Natural killer cell (primary cell): ENCODE measurements at regions of chr1 and their contacts with region 1.

Region 1: DNA sequence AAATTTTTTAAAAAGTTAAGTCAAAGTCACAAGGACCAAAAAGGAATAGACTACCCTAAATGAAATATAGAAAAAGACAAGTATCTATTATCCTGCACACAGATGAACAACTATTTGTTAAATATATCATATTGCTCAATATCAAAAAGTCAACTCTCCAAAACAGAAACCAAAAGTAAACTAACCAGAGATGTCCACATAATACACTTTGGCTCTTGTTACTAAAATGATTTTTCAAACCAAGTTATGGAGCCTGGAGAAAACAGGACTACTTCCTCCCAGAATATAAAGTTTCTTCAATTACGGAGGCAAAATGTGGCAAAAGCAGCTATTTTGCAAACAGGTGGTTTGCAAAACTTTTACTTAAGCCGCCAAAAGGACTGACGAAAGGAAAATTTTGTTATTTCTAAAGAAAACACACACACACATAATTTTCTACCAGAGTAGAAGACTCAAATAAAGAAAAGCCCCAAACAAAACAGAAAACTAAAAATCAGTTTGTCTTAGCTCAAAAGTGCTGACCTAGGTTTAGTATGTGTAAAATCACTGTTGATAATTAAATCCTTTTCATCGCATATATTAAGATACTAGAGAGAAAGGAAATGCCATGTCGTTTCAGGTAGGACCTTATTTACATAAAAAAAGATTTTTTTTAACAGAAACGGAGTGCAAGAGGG is 1.1 kb downstream of the DPYD start:
- DNase-seq: peak in 1 of 2 donors; percentile 38
- ATAC-seq: no peak
- H3K4me3 ChIP-seq: peak overlapping the region; percentile 90
- H3K4me3 Mint-ChIP-seq: peak overlapping the region; percentile 97
- H3K27ac ChIP-seq: peak overlapping the region; percentile 83
- H3K27ac Mint-ChIP-seq: peak overlapping the region; percentile 91 to 94
- H3K4me1 ChIP-seq: peaks cover 3% of the 10 kb centered on the region
- H3K4me1 Mint-ChIP-seq: peaks cover 51 to 52% of the 10 kb centered on the region in 2 donors
- H3K27me3 ChIP-seq: no peaks in the 10 kb centered on the region
- H3K27me3 Mint-ChIP-seq: no peaks in the 10 kb centered on the region
- CTCF ChIP-seq: no peak

Region 2: GRCh38 chr1:97849345-97850340 is 70.1 kb before region 1 on chr1:
- intact Hi-C with region 1: loop called (anchors 5 kb)
- DNase-seq: no peak
- ATAC-seq: peak; percentile 58 to 71 (median 61)
- H3K4me3 ChIP-seq: no peak overlapping the region
- H3K4me3 Mint-ChIP-seq: peak overlapping the region; percentile 63
- H3K27ac ChIP-seq: no peak overlapping the region
- H3K27ac Mint-ChIP-seq: peak overlapping the region in 1 of 2 donors; percentile 31
- H3K4me1 ChIP-seq: no peaks in the 10 kb centered on the region
- H3K4me1 Mint-ChIP-seq: peaks cover 10 to 17% of the 10 kb centered on the region in 2 donors
- H3K27me3 ChIP-seq: no peaks in the 10 kb centered on the region
- H3K27me3 Mint-ChIP-seq: no peaks in the 10 kb centered on the region
- CTCF ChIP-seq: no peak

Region 3: DNA sequence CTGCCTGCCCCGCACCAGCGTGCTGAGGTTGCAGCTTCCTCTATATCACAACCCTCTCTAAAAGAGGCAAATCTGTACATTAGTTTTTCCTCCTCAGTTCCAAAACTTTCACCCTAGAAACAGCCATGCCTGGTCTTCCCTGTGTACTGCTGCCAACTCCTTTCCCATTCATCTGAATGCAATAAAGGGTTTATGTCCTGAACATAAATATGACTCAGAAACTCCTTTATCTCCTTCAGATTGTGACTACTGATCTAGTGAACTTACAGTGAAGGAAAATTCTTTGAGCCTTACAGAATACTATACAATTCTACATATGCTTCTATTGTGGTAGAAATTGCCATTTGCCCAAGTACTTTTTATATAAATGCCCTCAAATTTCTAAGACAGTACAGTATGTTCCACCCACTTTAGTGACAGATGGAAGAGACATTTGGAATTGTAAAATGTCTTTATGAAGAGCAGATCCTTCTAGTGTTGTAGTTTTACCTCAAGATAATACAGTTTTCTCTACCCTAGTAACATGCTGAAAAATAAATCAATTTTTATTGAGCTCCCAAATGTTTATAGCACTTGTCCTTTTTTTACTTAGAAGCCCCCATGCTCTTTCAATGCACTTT is 396.7 kb after region 1 on chr1:
- intact Hi-C with region 1: no loop called
- DNase-seq: no peak
- ATAC-seq: no peak
- H3K4me3 ChIP-seq: no peak overlapping the region
- H3K4me3 Mint-ChIP-seq: no peak overlapping the region
- H3K27ac ChIP-seq: no peak overlapping the region
- H3K27ac Mint-ChIP-seq: no peak overlapping the region
- H3K4me1 ChIP-seq: no peaks in the 10 kb centered on the region
- H3K4me1 Mint-ChIP-seq: peaks cover 18 to 19% of the 10 kb centered on the region in 2 donors
- H3K27me3 ChIP-seq: no peaks in the 10 kb centered on the region
- H3K27me3 Mint-ChIP-seq: no peaks in the 10 kb centered on the region
- CTCF ChIP-seq: no peak

Region 4: GRCh38 chr1:98478121-98478520 is 558.4 kb after region 1 on chr1:
- intact Hi-C with region 1: no loop called
- DNase-seq: no peak
- ATAC-seq: no peak
- H3K4me3 ChIP-seq: no peak overlapping the region
- H3K4me3 Mint-ChIP-seq: no peak overlapping the region
- H3K27ac ChIP-seq: no peak overlapping the region
- H3K27ac Mint-ChIP-seq: no peak overlapping the region
- H3K4me1 ChIP-seq: no peaks in the 10 kb centered on the region
- H3K4me1 Mint-ChIP-seq: no peaks in the 10 kb centered on the region
- H3K27me3 ChIP-seq: no peaks in the 10 kb centered on the region
- H3K27me3 Mint-ChIP-seq: peaks cover 12 to 20% of the 10 kb centered on the region in 2 donors
- CTCF ChIP-seq: no peak